HEK293T (cell line): ENCODE measurements at regions of chr13 and their contacts with region 1.

Region 1: GRCh38 chr13:100100115-100100879 is 11.4 kb downstream of the PCCA start:
- DNase-seq: no peak

Region 2: DNA sequence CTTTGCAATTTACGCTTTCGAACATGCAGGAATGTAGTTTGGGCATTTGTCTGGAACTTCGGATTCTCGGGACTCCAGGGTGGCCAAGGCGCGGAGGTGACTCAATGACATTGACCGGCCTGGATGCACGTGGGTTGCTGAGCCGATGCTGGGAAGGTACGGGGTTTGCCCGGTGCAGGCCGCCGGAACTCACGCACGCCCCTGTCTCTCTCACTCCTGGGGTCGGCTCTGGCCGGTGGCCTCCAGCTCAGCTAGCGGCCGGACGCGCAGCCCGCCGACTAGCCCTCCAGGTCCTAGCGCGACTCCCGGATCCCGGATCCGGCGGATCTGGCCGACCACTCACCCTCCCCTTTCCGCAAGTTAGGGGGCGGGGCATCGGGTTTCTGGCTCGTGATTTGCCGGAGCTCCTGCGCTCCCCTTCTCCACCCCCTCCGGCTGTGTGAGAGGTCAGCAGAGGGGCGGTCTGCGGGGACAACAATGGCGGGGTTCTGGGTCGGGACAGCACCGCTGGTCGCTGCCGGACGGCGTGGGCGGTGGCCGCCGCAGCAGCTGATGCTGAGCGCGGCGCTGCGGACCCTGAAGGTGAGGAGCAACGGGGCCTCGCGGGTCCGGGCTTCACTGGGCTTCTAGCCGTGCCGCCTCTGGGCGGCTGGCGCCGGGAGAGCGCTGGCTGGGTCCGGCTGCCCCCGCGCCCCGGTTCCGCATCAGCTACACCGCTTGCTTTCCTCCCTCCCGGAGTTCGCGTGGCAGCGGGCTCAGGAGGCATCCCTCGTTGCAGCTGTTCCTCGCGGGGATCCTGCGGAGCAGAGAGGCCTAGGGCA is 11.4 kb before region 1 on chr13 and contains the start of gene PCCA:
- CTCF ChIA-PET with region 1: no interaction called
- POLR2A ChIA-PET with region 1: interaction called, 17 read pairs
- DNase-seq: peak; percentile 88